ENCODE measurements at regions of chr15 and their contacts with region 1.

Region 1: DNA sequence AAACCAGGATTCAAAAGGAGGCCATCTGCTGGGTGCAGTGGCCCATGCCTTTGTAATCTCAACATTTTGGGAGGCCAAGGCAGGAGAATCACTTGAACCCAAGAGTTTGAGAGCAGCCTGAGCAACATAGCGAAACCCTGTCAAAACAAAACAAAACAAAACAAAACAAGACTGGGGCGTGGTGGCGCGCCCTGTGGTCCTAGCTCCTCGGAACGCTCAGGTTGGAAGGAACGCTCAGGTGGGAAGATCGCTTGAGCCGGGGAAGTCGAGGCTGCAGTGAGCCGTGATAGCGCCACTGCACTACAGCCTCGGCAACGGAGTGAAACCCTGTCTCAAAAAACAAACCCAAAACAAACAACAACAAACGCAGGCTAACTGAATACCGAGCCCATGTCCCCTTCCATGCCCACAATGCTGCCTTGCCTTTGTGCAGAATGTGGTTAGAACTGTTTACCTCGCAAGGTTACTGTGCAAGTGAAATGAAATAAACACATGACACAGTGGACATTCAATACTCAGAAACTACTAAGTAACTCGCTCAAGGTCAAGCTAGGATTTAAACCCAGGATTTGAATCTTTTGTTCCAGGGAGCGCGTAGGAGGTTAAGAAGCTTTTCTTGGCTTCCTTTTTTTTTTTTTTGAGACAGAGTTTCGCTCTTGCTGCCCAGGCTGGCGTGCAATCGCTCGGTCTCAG is 766 bp upstream of the EMC4 start:
- DNase-seq: no peak
- H3K4me3 ChIP-seq: peak overlapping the region; percentile 74 to 88
- H3K27ac ChIP-seq: peak overlapping the region; percentile 85 to 92
- H3K4me1 ChIP-seq: peaks cover 0 to 24% (median 13%) of the 10 kb centered on the region in 4 donors
- H3K27me3 ChIP-seq: no peaks in the 10 kb centered on the region
- CTCF ChIP-seq: no peak

Region 2: DNA sequence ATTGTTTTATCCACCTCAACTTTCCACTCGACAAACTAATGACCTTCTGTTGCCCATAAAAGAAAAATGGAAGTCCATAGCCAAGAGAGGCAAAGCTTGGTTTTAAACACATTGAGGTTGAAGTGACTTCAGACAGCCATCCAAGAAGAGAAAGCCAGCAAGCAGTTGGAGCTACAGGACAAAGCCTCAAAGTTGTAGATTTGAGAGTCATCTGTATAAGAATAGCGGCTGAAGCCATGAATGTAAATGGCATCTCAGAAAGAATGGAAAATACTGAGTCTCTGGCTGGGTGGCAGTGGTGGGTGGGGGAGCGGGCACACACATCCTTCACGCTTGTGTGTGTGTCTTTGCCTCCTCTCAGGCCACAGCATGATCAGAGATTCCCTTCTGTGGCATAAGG is 379.9 kb before region 1 on chr15:
- intact Hi-C with region 1: no loop called
- DNase-seq: no peak
- H3K4me3 ChIP-seq: no peak overlapping the region
- H3K27ac ChIP-seq: no peak overlapping the region
- H3K4me1 ChIP-seq: no peaks in the 10 kb centered on the region
- H3K27me3 ChIP-seq: no peaks in the 10 kb centered on the region
- CTCF ChIP-seq: no peak

Region 3: GRCh38 chr15:34101366-34102175 is 122.5 kb before region 1 on chr15 and contains the starts of genes EMC7 and PGBD4:
- intact Hi-C with region 1: loop called (anchors 5 kb)
- DNase-seq: peak; percentile 99
- H3K4me3 ChIP-seq: peak within 1 kb of the TSS; percentile 87 to 91
- H3K27ac ChIP-seq: peak within 1 kb of the TSS; percentile 76 to 90
- H3K4me1 ChIP-seq: peaks cover 0 to 27% (median 22%) of the 10 kb centered on the region in 4 donors
- H3K27me3 ChIP-seq: no peaks in the 10 kb centered on the region
- CTCF ChIP-seq: no peak

Region 4: DNA sequence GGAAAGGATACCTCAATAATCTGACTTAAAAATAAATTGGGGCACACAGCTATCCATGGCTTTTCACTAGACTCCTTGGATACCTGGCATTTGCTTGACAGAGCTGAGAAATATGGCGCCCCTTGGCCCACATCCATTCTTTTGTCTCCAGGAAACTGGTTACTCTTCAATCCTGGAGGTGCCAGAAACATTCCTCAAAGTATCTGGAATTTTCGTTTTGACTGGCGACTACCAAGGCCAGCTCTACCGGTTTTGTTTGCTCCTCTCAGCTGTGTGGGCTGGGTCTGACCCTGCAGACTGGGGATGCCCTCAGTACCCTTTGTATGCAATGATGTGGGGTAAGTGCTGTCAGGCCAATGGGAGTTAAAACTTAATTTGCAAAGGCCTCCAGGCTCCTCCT is 41.1 kb before region 1 on chr15:
- intact Hi-C with region 1: no loop called
- DNase-seq: no peak
- H3K4me3 ChIP-seq: no peak overlapping the region
- H3K27ac ChIP-seq: no peak overlapping the region
- H3K4me1 ChIP-seq: peaks cover 0 to 15% (median 4%) of the 10 kb centered on the region in 4 donors
- H3K27me3 ChIP-seq: no peaks in the 10 kb centered on the region
- CTCF ChIP-seq: no peak

Region 5: GRCh38 chr15:34239151-34239808 is 15.2 kb after region 1 on chr15:
- intact Hi-C with region 1: no loop called
- DNase-seq: no peak
- H3K4me3 ChIP-seq: no peak overlapping the region
- H3K27ac ChIP-seq: no peak overlapping the region
- H3K4me1 ChIP-seq: no peaks in the 10 kb centered on the region
- H3K27me3 ChIP-seq: no peaks in the 10 kb centered on the region
- CTCF ChIP-seq: no peak

Region 6: DNA sequence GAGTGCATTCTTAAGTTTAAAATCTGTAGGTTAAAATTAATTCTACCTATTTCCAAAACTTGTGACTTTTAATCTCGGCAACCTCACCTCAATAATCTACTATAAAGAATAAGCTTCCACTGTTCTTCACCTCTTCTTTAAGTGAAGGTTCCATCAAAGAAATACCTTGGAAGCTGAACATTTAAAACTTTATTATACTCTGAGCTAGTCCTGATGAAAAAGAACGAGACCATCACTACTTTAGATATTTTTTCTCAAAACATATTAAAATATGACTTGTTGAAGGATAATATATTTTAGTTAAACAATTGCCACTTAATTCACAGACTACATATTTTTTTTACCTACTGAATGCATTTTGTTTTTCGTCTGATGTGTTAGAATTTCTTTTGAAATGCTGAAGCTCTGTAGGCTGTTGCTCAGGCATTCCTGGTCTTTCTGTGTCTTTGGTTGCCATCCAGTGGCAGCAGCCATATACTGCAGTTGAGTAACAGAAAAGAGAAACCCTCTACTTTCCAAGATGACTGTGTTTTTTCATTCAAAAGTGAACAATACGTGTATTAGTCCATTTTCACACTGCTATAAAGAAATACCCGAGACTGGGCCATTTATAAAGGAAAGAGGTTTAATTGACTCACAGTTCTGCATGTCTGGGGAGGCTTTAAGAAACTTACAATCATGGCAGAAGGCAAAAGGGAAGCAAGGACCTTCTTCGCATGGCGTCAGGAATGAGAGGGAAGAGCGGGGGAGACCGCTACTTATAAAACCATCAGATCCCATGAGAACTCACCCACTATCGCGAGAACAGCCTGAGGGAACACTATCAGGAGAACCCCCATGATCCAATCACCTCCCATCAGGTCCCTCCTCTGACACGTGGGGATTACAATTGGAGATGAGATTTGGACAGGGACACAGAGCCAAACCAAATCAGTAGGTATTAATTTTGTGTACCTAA is 363.9 kb after region 1 on chr15:
- intact Hi-C with region 1: loop called (anchors 10 kb)
- DNase-seq: peak in 1 of 2 donors; percentile 63
- H3K4me3 ChIP-seq: peak overlapping the region in 1 of 2 donors; percentile 23
- H3K27ac ChIP-seq: no peak overlapping the region
- H3K4me1 ChIP-seq: peaks cover 0 to 11% (median 8%) of the 10 kb centered on the region in 4 donors
- H3K27me3 ChIP-seq: no peaks in the 10 kb centered on the region
- CTCF ChIP-seq: peak; percentile 72 to 76

Region 7: DNA sequence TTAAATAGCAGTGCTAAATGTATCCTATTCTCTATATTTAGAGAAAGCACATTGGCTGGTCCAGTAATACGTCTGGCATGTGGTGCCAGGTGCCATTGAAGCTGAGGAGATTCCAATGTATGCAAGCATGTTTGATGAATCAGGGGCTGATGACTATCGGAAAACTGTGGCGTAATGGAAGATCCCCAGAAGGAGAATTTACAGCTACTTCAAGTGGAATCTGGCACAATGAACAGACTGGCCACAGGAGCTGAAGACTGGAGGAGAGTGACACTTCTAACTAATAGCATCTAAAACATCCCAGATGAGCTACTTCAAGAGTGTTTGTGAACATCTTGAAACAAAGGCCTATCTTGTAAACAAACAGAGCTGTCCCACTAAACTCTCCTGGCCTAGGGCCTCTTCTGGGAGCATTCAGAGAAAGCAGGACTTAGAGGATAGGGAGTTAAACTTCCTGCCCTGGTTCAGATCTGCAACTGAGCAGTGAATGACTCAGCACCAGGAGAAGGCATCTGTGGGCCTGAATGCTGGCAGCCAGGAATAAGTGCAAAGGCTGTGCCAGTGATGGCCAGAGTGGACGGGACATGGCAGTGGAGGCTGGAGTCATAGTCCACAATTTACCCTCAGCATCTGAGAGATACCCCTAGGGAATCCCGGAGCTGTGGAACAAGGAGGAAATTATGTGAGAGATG is 586.6 kb after region 1 on chr15:
- intact Hi-C with region 1: no loop called
- DNase-seq: peak in 1 of 2 donors; percentile 83
- H3K4me3 ChIP-seq: no peak overlapping the region
- H3K27ac ChIP-seq: peak overlapping the region; percentile 73 to 79
- H3K4me1 ChIP-seq: peaks cover 0 to 45% (median 21%) of the 10 kb centered on the region in 4 donors
- H3K27me3 ChIP-seq: no peaks in the 10 kb centered on the region
- CTCF ChIP-seq: no peak

Region 8: DNA sequence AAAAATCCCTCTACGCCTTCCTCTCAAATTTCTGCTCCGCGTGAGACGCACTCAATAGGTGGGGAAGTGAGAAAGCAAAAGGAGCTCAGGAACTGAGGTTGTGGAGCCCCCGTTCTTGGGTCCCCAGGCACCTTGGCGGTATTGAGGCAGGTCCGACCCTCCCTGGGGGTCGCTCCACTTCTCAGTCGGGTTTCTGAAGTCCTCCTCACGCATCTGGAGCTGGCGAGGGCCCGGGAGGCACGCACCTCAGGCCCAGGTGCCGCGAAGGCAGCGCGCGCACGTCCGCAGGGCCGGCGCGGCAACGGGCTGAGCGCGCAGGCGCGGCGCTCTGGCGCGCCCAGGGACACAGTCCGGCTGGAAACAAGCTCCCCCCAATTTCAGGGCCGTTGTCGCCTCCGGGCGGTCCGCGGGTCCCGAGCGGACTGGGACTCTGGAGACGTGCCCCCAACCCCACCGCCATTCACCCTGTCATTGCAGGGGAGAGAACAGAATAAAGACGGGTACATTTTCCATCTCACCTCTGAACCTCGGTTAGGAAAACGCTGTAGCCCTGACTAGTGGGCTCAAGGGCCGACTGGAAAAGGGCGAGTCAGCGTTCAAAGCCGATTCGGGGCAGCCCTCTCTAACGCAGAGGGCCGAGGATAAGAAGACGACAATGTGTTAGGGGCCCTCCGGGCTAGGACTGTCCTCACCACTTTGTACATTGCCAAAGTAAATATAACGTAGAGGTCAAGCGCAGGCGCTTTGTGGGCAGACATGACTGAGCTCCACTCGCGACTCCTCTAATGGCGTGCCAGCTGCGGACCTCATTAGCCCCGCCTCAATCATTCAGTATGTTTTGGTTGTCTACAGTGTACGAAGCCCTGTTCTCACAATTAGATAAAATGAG is 764.2 kb after region 1 on chr15 and contains the start of gene ZNF770:
- intact Hi-C with region 1: loop called (anchors 10 kb)
- DNase-seq: peak; percentile 70 to 85
- H3K4me3 ChIP-seq: peak within 1 kb of the TSS; percentile 76 to 77
- H3K27ac ChIP-seq: peak within 1 kb of the TSS; percentile 96 to 98
- H3K4me1 ChIP-seq: peaks cover 0 to 33% (median 24%) of the 10 kb centered on the region in 4 donors
- H3K27me3 ChIP-seq: no peaks in the 10 kb centered on the region
- CTCF ChIP-seq: peak in 1 of 2 experiments; percentile 8

Measured in tibial artery (tissue), 4 donors.